ENCODE measurements at regions of chr15 and their contacts with region 1.

Region 1: DNA sequence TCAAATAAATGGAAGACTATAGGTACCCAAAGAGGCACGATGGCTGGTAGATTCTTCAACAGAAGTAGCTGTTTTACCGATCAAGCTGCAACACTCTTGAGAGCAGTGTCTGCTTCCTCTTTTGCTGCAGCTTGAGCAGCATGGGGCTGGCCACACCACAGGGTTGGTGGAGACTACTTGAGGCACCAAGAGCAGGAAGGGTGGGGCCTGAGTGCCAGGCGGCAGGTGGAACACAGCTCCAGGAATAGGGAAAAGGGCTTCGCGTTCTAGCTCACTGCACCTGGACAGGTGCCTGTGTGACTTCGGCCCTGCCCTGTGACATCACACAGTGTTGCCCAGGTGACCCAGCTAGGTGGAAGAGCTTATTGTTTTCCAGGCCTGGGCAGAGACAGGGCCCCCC is at the start of gene CCDC33:
- DNase-seq: no peak
- H3K4me3 ChIP-seq: no peak within 1 kb of the TSS
- H3K27ac ChIP-seq: no peak within 1 kb of the TSS
- H3K27me3 ChIP-seq: no peaks in the 10 kb centered on the region
- CTCF ChIP-seq: no peak
- total RNA-seq, gene CCDC33: 0.14 to 2.0 (median 0.36) TPM in 18 of 120 experiments, not detected in the others

Region 2: GRCh38 chr15:74134387-74135027 is 101.5 kb before region 1 on chr15:
- intact Hi-C with region 1: loop called in 1 of 2 experiments (anchors 5 kb)
- DNase-seq: peak in 1 of 10 donors; percentile 38
- H3K4me3 ChIP-seq: no peak overlapping the region
- H3K27ac ChIP-seq: peak overlapping the region in 2 of 59 donors; percentile 29 to 73
- H3K27me3 ChIP-seq: peaks cover 0 to 79% (median 55%) of the 10 kb centered on the region in 45 donors
- CTCF ChIP-seq: peak in 30 of 56 donors; percentile 4 to 48 (median 31)

Region 3: DNA sequence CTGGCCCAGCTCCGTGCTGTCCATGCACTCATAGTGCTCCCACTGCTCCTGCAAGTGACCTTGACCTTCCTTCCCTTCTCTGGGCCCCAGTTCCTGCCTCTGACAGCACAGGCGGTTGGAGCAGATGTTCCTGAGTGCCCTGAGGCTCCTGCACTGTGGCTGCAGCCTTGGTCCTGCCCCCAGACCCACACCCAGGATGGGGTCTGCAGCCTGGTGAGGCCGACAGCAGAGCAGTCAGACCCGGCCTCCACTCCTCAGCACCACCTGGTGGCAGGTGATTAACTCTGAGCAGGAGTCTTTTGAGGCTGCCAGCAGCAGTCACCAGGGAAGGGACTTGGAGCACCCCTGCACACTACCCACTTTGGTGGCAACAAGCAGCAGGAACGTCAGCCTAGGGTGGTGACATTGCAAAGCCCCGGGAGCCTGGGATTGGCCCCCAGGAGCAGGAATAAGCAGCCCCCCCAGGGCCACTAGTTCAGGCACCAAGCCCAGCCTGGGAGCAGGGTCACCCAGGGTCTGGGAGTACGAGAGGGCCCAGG is 66.9 kb after region 1 on chr15:
- intact Hi-C with region 1: loop called in 1 of 2 experiments (anchors 5 kb)
- DNase-seq: peak in 8 of 10 donors; percentile 32 to 66 (median 52)
- H3K4me3 ChIP-seq: no peak overlapping the region
- H3K27ac ChIP-seq: no peak overlapping the region
- H3K27me3 ChIP-seq: peaks cover 0 to 22% (median 0%) of the 10 kb centered on the region in 45 donors
- CTCF ChIP-seq: peak; percentile 30 to 76 (median 60)